Heart left ventricle (tissue), 16 donors: ENCODE measurements at regions of chr16 and their contacts with region 1.

Region 1: DNA sequence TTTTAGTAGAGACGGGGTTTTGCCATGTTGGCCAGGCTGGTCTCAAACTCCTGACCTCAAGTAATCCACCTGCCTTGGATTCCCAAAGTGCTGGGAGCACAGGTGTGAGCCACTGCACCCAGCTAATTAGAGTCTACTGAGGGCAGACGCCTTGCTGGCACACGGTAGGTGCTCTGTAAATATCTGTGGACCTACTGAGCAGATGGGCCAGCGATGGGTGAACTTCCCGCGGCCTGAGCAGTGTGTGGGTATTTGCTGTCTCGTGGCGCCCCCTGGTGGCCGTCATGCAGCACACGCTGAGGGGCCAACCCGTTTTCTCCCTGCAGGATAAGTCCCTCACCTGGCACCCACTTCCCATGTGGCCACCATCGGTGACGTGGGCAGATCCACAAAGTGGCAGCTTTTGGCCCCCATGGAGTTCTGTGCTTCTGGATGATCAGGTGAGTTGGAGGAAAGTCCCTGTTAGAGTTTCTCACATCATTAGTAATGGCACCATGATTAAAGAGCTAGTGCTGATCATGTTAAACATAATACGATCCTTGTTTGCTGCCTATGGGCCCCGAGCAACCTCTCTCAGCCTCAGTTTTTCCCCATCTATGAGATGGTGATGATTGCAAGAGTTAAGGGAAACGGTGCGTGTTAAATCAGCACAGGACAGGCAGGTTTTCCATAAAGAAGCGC is 40.7 kb downstream of the ZDHHC7 start:
- DNase-seq: peak; percentile 76 to 90 (median 83)
- ATAC-seq: peak; percentile 66 to 83 (median 80)
- H3K4me3 ChIP-seq: no peak overlapping the region
- H3K27ac ChIP-seq: no peak overlapping the region
- H3K4me1 ChIP-seq: peaks cover 0 to 17% (median 6%) of the 10 kb centered on the region in 12 donors
- H3K27me3 ChIP-seq: no peaks in the 10 kb centered on the region
- CTCF ChIP-seq: peak; percentile 87 to 98 (median 91)
- POLR2A ChIP-seq: no peak

Region 2: DNA sequence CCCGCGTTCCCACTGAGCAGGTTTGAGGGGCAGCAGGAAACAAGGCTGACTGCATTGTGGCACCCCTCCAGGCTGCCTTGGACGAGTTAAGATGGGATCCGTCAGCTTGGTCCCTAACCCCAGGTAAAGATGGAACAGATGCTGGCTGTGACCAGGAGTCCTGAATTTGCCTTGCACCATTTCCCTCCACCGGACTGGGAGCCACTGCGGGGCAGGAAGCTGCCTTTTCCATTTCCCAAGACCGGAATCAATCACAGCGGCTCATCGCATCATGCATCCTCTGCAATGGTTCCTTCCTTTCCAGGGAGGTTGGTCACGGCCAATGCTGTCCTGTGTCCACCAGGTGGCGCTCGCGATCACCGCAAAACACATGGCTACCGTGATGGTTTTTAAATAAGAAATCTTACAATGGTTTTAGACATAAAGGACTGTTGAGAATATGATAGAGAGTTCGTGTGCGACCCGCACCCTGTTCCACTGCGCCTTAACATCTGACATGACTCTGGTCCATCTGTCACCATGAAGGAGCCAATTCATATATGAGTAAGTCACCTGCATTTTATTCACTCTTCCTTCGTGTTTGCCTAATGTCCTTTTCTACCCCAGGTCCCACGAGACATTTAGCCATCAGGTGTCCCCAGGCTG is 459.3 kb before region 1 on chr16:
- intact Hi-C with region 1: loop called in 3 of 10 experiments (anchors 2 to 10 kb)
- DNase-seq: peak; percentile 74 to 90 (median 82)
- ATAC-seq: peak; percentile 62 to 87 (median 82)
- H3K4me3 ChIP-seq: no peak overlapping the region
- H3K27ac ChIP-seq: no peak overlapping the region
- H3K4me1 ChIP-seq: peaks cover 0 to 42% (median 5%) of the 10 kb centered on the region in 12 donors
- H3K27me3 ChIP-seq: no peaks in the 10 kb centered on the region
- CTCF ChIP-seq: peak; percentile 94 to 99 (median 98)
- POLR2A ChIP-seq: peak in 1 of 2 donors; percentile 15

Region 3: GRCh38 chr16:84526794-84527503 is 443.6 kb before region 1 on chr16:
- intact Hi-C with region 1: loop called in 1 of 10 experiments (anchors 10 kb)
- DNase-seq: peak in 3 of 5 donors; percentile 40 to 62 (median 41)
- ATAC-seq: peak; percentile 21 to 68 (median 52)
- H3K4me3 ChIP-seq: peak overlapping the region in 8 of 12 donors; percentile 2 to 36 (median 28)
- H3K27ac ChIP-seq: peak overlapping the region; percentile 45 to 85 (median 73)
- H3K4me1 ChIP-seq: peaks cover 8 to 36% (median 23%) of the 10 kb centered on the region in 12 donors
- H3K27me3 ChIP-seq: no peaks in the 10 kb centered on the region
- CTCF ChIP-seq: no peak
- POLR2A ChIP-seq: peak in 1 of 2 donors; percentile 18

Region 4: GRCh38 chr16:84672276-84673202 is 298.0 kb before region 1 on chr16:
- intact Hi-C with region 1: loop called in 1 of 10 experiments (anchors 10 kb)
- DNase-seq: peak; percentile 71 to 91 (median 80)
- ATAC-seq: peak; percentile 70 to 90 (median 86)
- H3K4me3 ChIP-seq: no peak overlapping the region
- H3K27ac ChIP-seq: no peak overlapping the region
- H3K4me1 ChIP-seq: peaks cover 0 to 5% (median 0%) of the 10 kb centered on the region in 12 donors
- H3K27me3 ChIP-seq: no peaks in the 10 kb centered on the region
- CTCF ChIP-seq: peak in 11 of 12 donors; percentile 84 to 96 (median 91)
- POLR2A ChIP-seq: no peak

Region 5: GRCh38 chr16:84754353-84754856 is 216.2 kb before region 1 on chr16:
- intact Hi-C with region 1: loop called (anchors 1 to 5 kb)
- DNase-seq: peak in 3 of 5 donors; percentile 46 to 62 (median 60)
- ATAC-seq: peak in 3 of 4 donors; percentile 75 to 82 (median 78)
- H3K4me3 ChIP-seq: no peak overlapping the region
- H3K27ac ChIP-seq: peak overlapping the region in 1 of 12 donors; percentile 54
- H3K4me1 ChIP-seq: peaks cover 0 to 66% (median 16%) of the 10 kb centered on the region in 12 donors
- H3K27me3 ChIP-seq: no peaks in the 10 kb centered on the region
- CTCF ChIP-seq: peak; percentile 75 to 90 (median 84)
- POLR2A ChIP-seq: no peak

Region 6: GRCh38 chr16:84925092-84925772 is 45.4 kb before region 1 on chr16:
- intact Hi-C with region 1: loop called in 7 of 10 experiments (anchors 2 to 5 kb)
- DNase-seq: peak; percentile 56 to 86 (median 64)
- ATAC-seq: peak in 1 of 4 donors; percentile 19
- H3K4me3 ChIP-seq: no peak overlapping the region
- H3K27ac ChIP-seq: peak overlapping the region in 8 of 12 donors; percentile 44 to 89 (median 54)
- H3K4me1 ChIP-seq: peaks cover 0 to 69% (median 38%) of the 10 kb centered on the region in 12 donors
- H3K27me3 ChIP-seq: no peaks in the 10 kb centered on the region
- CTCF ChIP-seq: peak; percentile 64 to 91 (median 80)
- POLR2A ChIP-seq: no peak

Region 7: GRCh38 chr16:85072947-85073346 is 102.4 kb after region 1 on chr16:
- intact Hi-C with region 1: no loop called
- DNase-seq: peak in 3 of 5 donors; percentile 52 to 76 (median 63)
- ATAC-seq: peak; percentile 35 to 91 (median 78)
- H3K4me3 ChIP-seq: no peak overlapping the region
- H3K27ac ChIP-seq: no peak overlapping the region
- H3K4me1 ChIP-seq: peaks cover 0 to 11% (median 0%) of the 10 kb centered on the region in 12 donors
- H3K27me3 ChIP-seq: no peaks in the 10 kb centered on the region
- CTCF ChIP-seq: no peak
- POLR2A ChIP-seq: no peak